ENCODE measurements at regions of chr11 and their contacts with region 1.

Region 1: DNA sequence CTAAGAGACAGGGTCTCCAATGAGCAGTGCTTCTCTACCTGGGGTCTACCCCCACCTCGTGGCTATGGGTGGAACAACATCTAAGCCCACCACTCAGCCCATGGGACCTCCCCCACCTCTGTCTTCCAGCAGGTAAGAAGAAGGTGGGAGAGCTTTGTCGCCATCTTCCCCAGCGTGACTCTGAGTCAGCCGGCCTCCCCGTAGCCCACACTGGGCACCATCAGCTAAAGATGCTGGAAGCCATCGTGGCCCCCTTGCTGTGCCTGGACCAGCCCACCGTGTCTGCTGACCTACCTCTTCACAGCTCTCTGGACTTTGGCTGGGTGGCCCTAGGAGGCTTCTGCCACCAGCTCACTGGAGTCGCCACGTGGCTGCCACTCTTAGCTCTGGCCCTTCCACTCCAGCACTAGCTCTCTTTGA is 954 bp downstream of the C11orf86 start:
- DNase-seq: peak; percentile 67 to 95
- H3K4me3 ChIP-seq: no peak overlapping the region
- H3K27ac ChIP-seq: no peak overlapping the region
- H3K4me1 ChIP-seq: peaks cover 0 to 3% (median 0%) of the 10 kb centered on the region in 4 experiments; a peak in 1 of 7 replicates
- H3K27me3 ChIP-seq: no peaks in the 10 kb centered on the region
- CTCF ChIP-seq: peak; percentile 78 to 92 (median 85)
- EP300 ChIP-seq: no peak
- POLR2A ChIP-seq: no peak
- RAD21 ChIP-seq: peak; percentile 88 to 93

Region 2: DNA sequence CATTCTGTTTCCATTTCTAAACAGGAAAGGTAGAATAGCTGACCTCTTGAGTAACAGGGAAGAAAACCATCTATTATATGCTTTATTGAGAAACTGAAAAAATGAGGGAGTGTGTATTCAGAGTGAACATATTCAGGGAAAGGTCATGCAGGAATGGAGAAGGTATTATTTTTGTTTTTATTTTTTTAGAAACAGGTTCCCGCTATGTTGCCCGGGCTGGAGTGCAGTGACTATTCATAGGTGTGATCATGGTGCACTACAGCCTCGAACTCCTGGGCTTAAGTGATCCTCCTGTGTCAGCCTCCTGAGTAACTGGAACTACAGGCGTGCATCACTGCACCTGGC is 141.6 kb before region 1 on chr11:
- CTCF ChIA-PET with region 1: interaction called, 10 read pairs
- POLR2A ChIA-PET with region 1: no interaction called
- DNase-seq: no peak
- H3K4me3 ChIP-seq: no peak overlapping the region
- H3K27ac ChIP-seq: no peak overlapping the region
- H3K4me1 ChIP-seq: no peaks in the 10 kb centered on the region
- H3K27me3 ChIP-seq: no peaks in the 10 kb centered on the region
- CTCF ChIP-seq: no peak
- EP300 ChIP-seq: no peak
- POLR2A ChIP-seq: no peak
- RAD21 ChIP-seq: no peak

Region 3: DNA sequence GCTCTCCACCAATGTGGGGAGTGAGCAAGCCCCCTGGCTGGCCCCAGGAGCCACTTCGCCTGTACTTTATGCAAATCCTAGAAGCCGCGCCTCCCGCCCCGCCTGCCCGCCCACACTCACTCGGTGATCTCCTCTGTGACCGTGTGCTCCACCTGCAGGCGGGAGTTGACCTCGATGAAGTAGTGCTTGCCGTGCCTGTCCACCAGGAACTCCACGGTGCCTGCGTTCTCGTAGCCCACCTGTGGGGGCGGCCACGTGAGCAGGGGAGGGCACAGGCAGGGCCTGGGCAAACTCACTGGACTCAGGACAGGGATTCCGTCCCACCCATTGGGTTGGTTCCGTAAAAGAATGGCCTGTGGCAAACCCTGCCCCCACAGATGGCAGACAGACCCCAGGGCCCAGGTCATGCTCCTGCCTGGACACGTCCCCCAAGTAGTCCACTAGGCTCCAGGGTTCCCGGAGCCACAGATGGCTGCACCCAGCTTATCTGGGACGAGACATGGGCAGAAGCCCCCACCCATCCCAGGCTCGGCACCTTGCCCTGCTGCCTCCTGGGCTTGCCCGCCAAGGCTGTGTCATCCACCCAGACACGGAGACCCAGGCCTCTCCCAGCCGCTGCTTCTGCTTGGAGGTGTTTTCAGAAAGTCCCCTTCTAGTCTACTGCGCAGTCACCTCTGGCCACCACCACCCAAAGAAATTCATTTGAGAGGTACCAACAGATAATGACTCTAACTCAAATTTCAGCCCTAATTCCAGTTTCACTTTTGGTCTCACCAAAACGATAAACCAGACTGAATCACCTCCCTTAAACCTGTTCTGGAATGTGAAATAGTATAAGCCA is 107.1 kb before region 1 on chr11:
- CTCF ChIA-PET with region 1: interaction called, 26 read pairs
- POLR2A ChIA-PET with region 1: interaction called, 5 read pairs
- DNase-seq: peak in 1 of 2 experiments; percentile 89
- H3K4me3 ChIP-seq: no peak overlapping the region
- H3K27ac ChIP-seq: no peak overlapping the region
- H3K4me1 ChIP-seq: peaks cover 0 to 12% (median 2%) of the 10 kb centered on the region in 4 experiments; a peak in 5 of 7 replicates
- H3K27me3 ChIP-seq: no peaks in the 10 kb centered on the region
- CTCF ChIP-seq: peak in 2 of 3 experiments; percentile 90 to 97; a peak in 3 of 4 replicates
- EP300 ChIP-seq: no peak
- POLR2A ChIP-seq: no peak
- RAD21 ChIP-seq: peak; percentile 50 to 62

Region 4: GRCh38 chr11:66906061-66906735 is 69.9 kb before region 1 on chr11:
- CTCF ChIA-PET with region 1: interaction called, 10 read pairs
- POLR2A ChIA-PET with region 1: no interaction called
- DNase-seq: no peak
- H3K4me3 ChIP-seq: no peak overlapping the region
- H3K27ac ChIP-seq: peak overlapping the region; percentile 57; the same call in 1 of the 2 replicates
- H3K4me1 ChIP-seq: peaks cover 2 to 22% (median 13%) of the 10 kb centered on the region in 4 experiments
- H3K27me3 ChIP-seq: no peaks in the 10 kb centered on the region
- CTCF ChIP-seq: no peak
- EP300 ChIP-seq: no peak
- POLR2A ChIP-seq: no peak
- RAD21 ChIP-seq: no peak

Region 5: GRCh38 chr11:66958232-66958955 is 17.7 kb before region 1 on chr11 and contains the start of gene PC:
- CTCF ChIA-PET with region 1: interaction called, 25 read pairs
- POLR2A ChIA-PET with region 1: interaction called, 7 read pairs
- DNase-seq: peak; percentile 97 to 100
- H3K4me3 ChIP-seq: peak within 1 kb of the TSS; percentile 52 to 72 (median 61)
- H3K27ac ChIP-seq: peak within 1 kb of the TSS; percentile 56; the same call in 1 of the 2 replicates
- H3K4me1 ChIP-seq: peaks cover 3 to 16% (median 7%) of the 10 kb centered on the region in 4 experiments
- H3K27me3 ChIP-seq: peaks cover 0 to 6% (median 4%) of the 10 kb centered on the region in 4 experiments; a peak in 4 of 7 replicates
- CTCF ChIP-seq: 0 out of 4 replicates have a peak, but pooled peaks of 1 of the 3 experiments have one; percentile 1
- EP300 ChIP-seq: peak in 1 of 2 experiments; percentile 75; a peak in 1 of 3 replicates
- POLR2A ChIP-seq: peak in 1 of 2 experiments; percentile 56; a peak in 2 of 3 replicates
- RAD21 ChIP-seq: no peak
- total RNA-seq, gene PC: 27.2 and 27.5 TPM in 2 replicates

Region 6: DNA sequence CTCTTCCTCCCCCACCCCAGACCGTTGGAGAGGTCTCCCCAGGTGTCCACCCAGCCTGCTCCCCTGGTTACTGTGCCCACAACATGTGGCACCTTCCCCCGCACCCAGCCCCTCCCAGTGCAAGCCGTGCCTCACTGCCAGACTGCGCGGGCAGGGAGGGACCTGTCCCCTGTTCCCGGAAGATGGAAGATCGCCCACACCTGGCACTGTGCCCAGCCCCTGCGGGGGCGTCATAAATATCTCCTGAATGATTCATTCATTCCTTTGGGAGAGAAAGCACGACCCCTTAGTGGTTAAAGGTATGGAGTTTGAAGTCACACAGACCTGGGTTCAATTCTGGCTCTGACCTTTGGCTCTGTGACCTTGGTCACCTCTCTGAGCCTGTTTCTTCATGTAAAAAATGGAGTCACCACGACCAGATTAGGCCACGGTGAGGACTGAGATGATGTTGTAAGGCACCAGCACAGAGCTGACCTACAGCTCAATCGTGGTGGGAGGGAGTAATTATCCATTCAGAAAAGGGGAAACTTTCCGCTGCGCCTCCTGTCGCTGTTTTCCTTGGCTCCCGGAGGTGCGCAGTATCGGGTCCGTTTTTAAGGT is 46.4 kb after region 1 on chr11:
- CTCF ChIA-PET with region 1: interaction called, 32 read pairs
- POLR2A ChIA-PET with region 1: no interaction called
- DNase-seq: no peak
- H3K4me3 ChIP-seq: peak overlapping the region; percentile 29 to 61 (median 40); a peak in 7 of 8 replicates
- H3K27ac ChIP-seq: no peak overlapping the region
- H3K4me1 ChIP-seq: peaks cover 2 to 9% (median 7%) of the 10 kb centered on the region in 4 experiments; a peak in 6 of 7 replicates
- H3K27me3 ChIP-seq: peaks cover 24 to 37% (median 29%) of the 10 kb centered on the region in 4 experiments
- CTCF ChIP-seq: no peak
- EP300 ChIP-seq: no peak
- POLR2A ChIP-seq: no peak
- RAD21 ChIP-seq: no peak

Measured in H1 (cell line).